CD4-positive, alpha-beta memory T cell (primary cell): ENCODE measurements at regions of chr9 and their contacts with region 1.

Region 1: DNA sequence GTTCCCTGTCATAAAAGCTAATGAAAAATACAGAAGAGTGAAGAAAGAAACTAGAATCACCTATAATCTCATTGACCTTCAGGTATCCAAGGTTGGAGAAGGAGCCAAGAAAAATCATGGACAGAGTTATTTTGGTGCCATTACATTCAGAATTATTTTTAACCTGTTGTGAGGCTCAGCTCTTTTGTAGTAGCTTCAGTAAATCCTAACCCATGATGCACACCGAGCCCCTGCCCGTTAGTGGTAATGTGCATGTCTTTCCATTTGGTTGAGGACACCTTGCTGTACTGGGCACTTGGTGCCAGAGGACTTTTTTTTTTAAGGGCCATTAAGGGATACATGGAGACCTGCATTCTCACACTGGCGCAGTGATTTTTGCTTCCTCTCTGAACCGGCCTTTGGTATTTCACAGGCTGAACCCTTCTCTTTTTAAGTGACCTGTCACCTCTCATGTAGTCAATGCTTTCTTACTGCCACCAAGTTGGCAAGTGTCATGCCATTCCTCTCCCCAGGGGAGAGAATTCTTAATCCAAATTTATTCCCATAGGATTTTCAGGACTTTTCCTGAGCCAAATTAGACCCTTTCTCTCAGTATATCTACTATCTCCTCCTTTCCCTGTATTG is 125.6 kb downstream of the SMARCA2 start:
- DNase-seq: no peak
- H3K4me3 ChIP-seq: no peak overlapping the region
- H3K4me3 Mint-ChIP-seq: no peak overlapping the region
- H3K27ac ChIP-seq: no peak overlapping the region
- H3K27ac Mint-ChIP-seq: peak overlapping the region in 1 of 7 donors; percentile 25
- H3K4me1 ChIP-seq: no peaks in the 10 kb centered on the region
- H3K4me1 Mint-ChIP-seq: peaks cover 30 to 79% (median 60%) of the 10 kb centered on the region in 4 donors
- H3K27me3 ChIP-seq: no peaks in the 10 kb centered on the region
- H3K27me3 Mint-ChIP-seq: no peaks in the 10 kb centered on the region

Region 2: GRCh38 chr9:2087500-2088313 is 53.0 kb before region 1 on chr9:
- CTCF ChIA-PET with region 1: no interaction called
- POLR2A ChIA-PET with region 1: no interaction called
- intact Hi-C with region 1: no loop called
- DNase-seq: peak in 4 of 5 donors; percentile 60 to 64 (median 60)
- H3K4me3 ChIP-seq: no peak overlapping the region
- H3K4me3 Mint-ChIP-seq: no peak overlapping the region
- H3K27ac ChIP-seq: no peak overlapping the region
- H3K27ac Mint-ChIP-seq: peak overlapping the region in 3 of 7 donors; percentile 3 to 60 (median 54)
- H3K4me1 ChIP-seq: no peaks in the 10 kb centered on the region
- H3K4me1 Mint-ChIP-seq: peaks cover 3 to 6% (median 5%) of the 10 kb centered on the region in 4 donors
- H3K27me3 ChIP-seq: no peaks in the 10 kb centered on the region
- H3K27me3 Mint-ChIP-seq: no peaks in the 10 kb centered on the region

Region 3: DNA sequence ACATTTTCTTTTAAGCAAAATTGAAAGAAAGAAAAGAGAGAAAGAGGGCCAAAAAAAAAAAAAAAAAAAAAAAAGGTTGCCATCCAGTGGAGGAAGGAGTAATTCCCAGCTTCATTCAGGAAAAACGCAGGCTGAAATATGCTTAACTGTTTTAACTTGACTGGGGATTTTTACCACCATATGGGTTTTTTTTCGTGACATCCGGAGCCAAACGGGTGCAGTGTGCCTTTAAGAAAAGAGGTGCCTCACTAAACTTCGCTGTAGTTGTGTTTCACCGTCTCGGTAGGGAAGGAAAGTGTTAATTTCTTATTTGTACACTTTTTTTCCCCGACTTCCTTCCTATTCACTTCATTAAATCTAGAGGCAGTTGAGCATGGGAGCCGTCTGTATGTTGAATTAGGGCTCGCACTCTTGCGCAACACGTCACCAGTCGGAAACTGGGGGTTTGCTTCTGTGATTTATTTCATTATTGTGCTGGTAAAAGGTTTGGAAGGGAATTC is 17.4 kb after region 1 on chr9:
- CTCF ChIA-PET with region 1: no interaction called
- POLR2A ChIA-PET with region 1: no interaction called
- intact Hi-C with region 1: loop called (anchors 2 kb)
- DNase-seq: peak; percentile 52 to 74 (median 63)
- H3K4me3 ChIP-seq: peak overlapping the region; percentile 36 to 48
- H3K4me3 Mint-ChIP-seq: peak overlapping the region; percentile 85 to 92 (median 90)
- H3K27ac ChIP-seq: peak overlapping the region; percentile 24
- H3K27ac Mint-ChIP-seq: peak overlapping the region; percentile 65 to 92 (median 85)
- H3K4me1 ChIP-seq: peaks cover 60% of the 10 kb centered on the region
- H3K4me1 Mint-ChIP-seq: peaks cover 42 to 81% (median 62%) of the 10 kb centered on the region in 4 donors
- H3K27me3 ChIP-seq: no peaks in the 10 kb centered on the region
- H3K27me3 Mint-ChIP-seq: no peaks in the 10 kb centered on the region

Region 4: DNA sequence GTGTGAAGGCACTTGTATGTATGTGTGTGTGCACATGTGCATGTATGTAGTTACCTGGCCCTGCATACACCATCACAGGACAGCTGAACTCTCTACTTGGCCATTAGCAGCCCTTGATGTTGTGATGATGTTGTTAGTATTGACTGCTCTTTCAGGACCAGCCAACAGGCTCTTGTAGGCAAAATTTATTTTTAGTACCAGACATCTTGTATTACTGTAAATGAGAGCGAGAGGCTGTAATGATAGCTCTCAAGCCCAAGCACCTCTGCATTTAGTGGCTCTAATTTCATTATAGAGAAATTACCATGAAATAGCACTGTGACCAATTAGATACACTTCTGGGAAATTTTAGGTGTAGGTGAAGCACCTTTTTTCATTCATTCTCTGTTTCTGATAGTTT is 32.5 kb after region 1 on chr9:
- CTCF ChIA-PET with region 1: no interaction called
- POLR2A ChIA-PET with region 1: no interaction called
- intact Hi-C with region 1: no loop called
- DNase-seq: no peak
- H3K4me3 ChIP-seq: no peak overlapping the region
- H3K4me3 Mint-ChIP-seq: no peak overlapping the region
- H3K27ac ChIP-seq: no peak overlapping the region
- H3K27ac Mint-ChIP-seq: peak overlapping the region in 2 of 7 donors; percentile 7 to 26
- H3K4me1 ChIP-seq: no peaks in the 10 kb centered on the region
- H3K4me1 Mint-ChIP-seq: peaks cover 10 to 38% (median 20%) of the 10 kb centered on the region in 4 donors
- H3K27me3 ChIP-seq: no peaks in the 10 kb centered on the region
- H3K27me3 Mint-ChIP-seq: no peaks in the 10 kb centered on the region